ENCODE measurements at regions of chr20 and their contacts with region 1.

Region 1: DNA sequence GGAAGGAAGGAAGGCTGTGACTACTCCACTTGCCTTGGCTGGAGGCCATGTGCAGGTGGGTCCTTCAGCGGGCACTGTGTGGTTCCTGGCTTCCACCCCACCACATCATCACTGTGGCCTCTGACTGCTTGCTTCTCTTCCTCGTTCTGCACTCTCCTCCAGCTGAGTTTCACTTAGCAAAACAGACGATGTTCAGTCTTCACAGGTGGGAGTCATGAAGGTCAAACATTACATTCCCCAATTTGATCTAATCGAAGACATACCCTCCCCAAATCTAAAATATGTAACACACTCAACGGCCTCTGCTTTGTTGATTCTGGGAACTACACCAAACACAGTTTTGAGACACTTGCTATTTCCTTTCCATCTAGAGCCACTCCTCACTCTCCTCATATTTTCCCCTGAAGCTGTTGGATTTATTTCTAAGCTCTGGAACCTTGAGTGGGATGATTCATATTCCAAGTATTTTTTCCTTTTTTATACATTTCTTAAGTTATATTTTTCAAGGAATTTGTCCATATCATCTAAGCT is 132.5 kb upstream of the FOXA2 start:
- DNase-seq: no peak
- ATAC-seq: no peak
- H3K4me3 ChIP-seq: no peak overlapping the region
- H3K27ac ChIP-seq: no peak overlapping the region
- H3K4me1 ChIP-seq: no peaks in the 10 kb centered on the region
- H3K27me3 ChIP-seq: no peaks in the 10 kb centered on the region; a peak in 2 of 4 replicates
- CTCF ChIP-seq: no peak
- EP300 ChIP-seq: no peak
- POLR2A ChIP-seq: no peak
- RAD21 ChIP-seq: no peak

Region 2: DNA sequence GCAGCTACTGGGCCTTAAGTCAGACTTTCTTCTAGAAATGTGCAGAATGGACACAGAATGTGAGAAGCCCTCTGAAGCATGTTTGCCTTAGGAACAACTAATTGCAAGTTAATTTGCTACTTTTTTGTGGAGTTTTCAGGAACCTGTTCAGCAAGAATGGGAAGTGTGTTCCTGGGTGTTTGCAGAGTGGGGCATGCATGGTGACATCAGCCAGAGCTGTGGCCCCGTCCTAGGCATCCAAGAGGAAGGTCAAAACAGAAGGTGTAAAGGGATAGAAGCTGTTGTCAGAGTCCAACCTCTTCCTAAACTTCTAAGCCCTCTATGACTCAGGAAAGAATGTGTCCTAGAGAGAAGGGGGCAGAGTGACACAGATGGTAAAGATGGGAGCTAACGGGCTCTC is 420.8 kb before region 1 on chr20:
- CTCF ChIA-PET with region 1: no interaction called
- POLR2A ChIA-PET with region 1: no interaction called
- RAD21 ChIA-PET with region 1: no interaction called
- SMC1A ChIA-PET with region 1: no interaction called
- in situ Hi-C with region 1: no loop called
- intact Hi-C with region 1: no loop called
- DNase-seq: no peak
- ATAC-seq: no peak
- H3K4me3 ChIP-seq: no peak overlapping the region
- H3K27ac ChIP-seq: no peak overlapping the region
- H3K4me1 ChIP-seq: no peaks in the 10 kb centered on the region
- H3K27me3 ChIP-seq: no peaks in the 10 kb centered on the region
- CTCF ChIP-seq: no peak
- EP300 ChIP-seq: no peak
- POLR2A ChIP-seq: no peak
- RAD21 ChIP-seq: no peak

Region 3: DNA sequence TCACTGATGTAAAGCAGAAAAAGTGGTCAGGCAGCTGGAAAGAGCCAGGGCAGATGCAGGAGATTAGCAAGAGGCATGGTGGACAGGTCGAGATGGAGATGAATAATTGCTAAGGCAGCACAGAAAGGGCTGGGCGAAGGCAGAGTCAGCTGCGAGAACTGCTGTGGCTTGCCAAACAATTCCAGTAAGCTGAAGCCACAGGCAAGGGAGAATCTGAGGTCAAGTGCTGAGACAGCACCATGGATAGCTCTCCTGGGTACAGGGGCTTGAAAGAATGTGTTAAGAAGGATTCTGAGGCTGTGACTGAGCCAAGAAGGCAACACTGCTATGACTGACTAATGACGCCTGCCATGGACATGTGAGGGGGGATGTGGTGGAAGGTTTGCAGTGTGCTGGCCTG is 88.3 kb after region 1 on chr20:
- CTCF ChIA-PET with region 1: no interaction called
- POLR2A ChIA-PET with region 1: interaction called, 13 read pairs
- RAD21 ChIA-PET with region 1: no interaction called
- SMC1A ChIA-PET with region 1: no interaction called
- in situ Hi-C with region 1: no loop called
- intact Hi-C with region 1: no loop called
- DNase-seq: no peak
- ATAC-seq: no peak
- H3K4me3 ChIP-seq: no peak overlapping the region
- H3K27ac ChIP-seq: no peak overlapping the region
- H3K4me1 ChIP-seq: no peaks in the 10 kb centered on the region
- H3K27me3 ChIP-seq: no peaks in the 10 kb centered on the region
- CTCF ChIP-seq: no peak
- EP300 ChIP-seq: no peak
- POLR2A ChIP-seq: no peak
- RAD21 ChIP-seq: no peak

Region 4: GRCh38 chr20:22836211-22836610 is 119.3 kb after region 1 on chr20:
- CTCF ChIA-PET with region 1: no interaction called
- POLR2A ChIA-PET with region 1: no interaction called
- RAD21 ChIA-PET with region 1: no interaction called
- SMC1A ChIA-PET with region 1: no interaction called
- in situ Hi-C with region 1: no loop called
- intact Hi-C with region 1: no loop called
- DNase-seq: no peak
- ATAC-seq: no peak
- H3K4me3 ChIP-seq: no peak overlapping the region
- H3K27ac ChIP-seq: no peak overlapping the region
- H3K4me1 ChIP-seq: no peaks in the 10 kb centered on the region
- H3K27me3 ChIP-seq: no peaks in the 10 kb centered on the region
- CTCF ChIP-seq: no peak
- EP300 ChIP-seq: no peak
- POLR2A ChIP-seq: no peak
- RAD21 ChIP-seq: no peak

Region 5: DNA sequence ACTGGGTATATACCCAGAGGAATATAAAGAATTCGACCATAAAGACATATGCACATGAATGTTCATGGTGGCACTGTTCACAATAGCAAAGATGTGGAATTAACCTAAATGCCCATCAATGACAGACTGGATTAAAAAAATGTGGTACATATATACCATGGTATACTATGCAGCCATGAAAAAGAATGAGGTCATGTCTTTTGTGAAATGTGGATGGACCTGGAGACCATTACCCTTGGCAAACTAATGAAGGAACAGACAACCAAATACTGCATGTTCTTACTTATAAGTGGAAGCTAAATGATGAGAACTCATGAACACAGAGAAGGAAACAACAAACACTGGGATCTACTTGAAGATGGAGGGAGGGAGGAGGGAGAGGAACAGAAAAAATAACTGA is 131.5 kb after region 1 on chr20:
- CTCF ChIA-PET with region 1: no interaction called
- POLR2A ChIA-PET with region 1: no interaction called
- RAD21 ChIA-PET with region 1: no interaction called
- SMC1A ChIA-PET with region 1: no interaction called
- in situ Hi-C with region 1: no loop called
- intact Hi-C with region 1: no loop called
- DNase-seq: no peak
- ATAC-seq: no peak
- H3K4me3 ChIP-seq: no peak overlapping the region
- H3K27ac ChIP-seq: no peak overlapping the region
- H3K4me1 ChIP-seq: no peaks in the 10 kb centered on the region
- H3K27me3 ChIP-seq: no peaks in the 10 kb centered on the region
- CTCF ChIP-seq: no peak
- EP300 ChIP-seq: no peak
- POLR2A ChIP-seq: no peak
- RAD21 ChIP-seq: no peak